ENCODE measurements at regions of chr4 and their contacts with region 1.

Region 1: GRCh38 chr4:182289781-182290180 is 46.6 kb downstream of the TENM3 start:
- DNase-seq: no peak

Region 2: GRCh38 chr4:182238355-182238931 is 51.3 kb before region 1 on chr4:
- intact Hi-C with region 1: loop called in 1 of 2 experiments (anchors 2 kb)
- DNase-seq: no peak

Region 3: DNA sequence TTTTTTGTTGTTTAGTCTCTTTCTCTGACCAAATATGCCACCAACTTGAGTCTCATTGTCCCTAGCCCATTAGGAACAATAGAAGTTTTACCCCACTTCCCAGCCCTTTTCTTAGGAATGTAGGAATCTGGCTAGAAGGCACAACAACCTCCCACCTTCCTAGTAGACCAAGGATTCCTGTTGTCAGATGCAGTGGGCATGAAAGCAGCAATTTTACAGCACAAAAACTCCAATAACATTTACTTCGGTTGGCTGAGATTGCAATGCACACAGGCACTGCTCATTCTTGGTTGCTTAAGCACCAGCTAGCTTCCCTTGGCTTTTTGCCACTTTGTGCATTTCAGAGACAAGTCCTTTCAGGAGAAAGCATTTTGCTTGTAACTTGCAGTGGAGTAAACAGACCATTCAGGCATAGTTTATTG is 266.2 kb after region 1 on chr4:
- intact Hi-C with region 1: no loop called
- DNase-seq: no peak